Activated B cell treated with CpG ODN at 0.5 μM for 24 hours (primary cell): ENCODE measurements at regions of chr11 and their contacts with region 1.

Region 1: GRCh38 chr11:75399344-75400145 is at the start of gene RPS3:
- DNase-seq: peak; percentile 83
- ATAC-seq: peak; percentile 91
- H3K4me3 Mint-ChIP-seq: peak within 1 kb of the TSS; percentile 99
- H3K27ac Mint-ChIP-seq: peak within 1 kb of the TSS; percentile 98
- H3K4me1 Mint-ChIP-seq: peaks cover 49% of the 10 kb centered on the region
- H3K27me3 Mint-ChIP-seq: peaks cover 5% of the 10 kb centered on the region
- CTCF ChIP-seq: no peak
- total RNA-seq, gene RPS3: 4,635 and 5,236 TPM in 2 replicates

Region 2: GRCh38 chr11:75429902-75430719 is 30.6 kb after region 1 on chr11:
- CTCF ChIA-PET with region 1: no interaction called
- POLR2A ChIA-PET with region 1: interaction called, 5 read pairs
- intact Hi-C with region 1: loop called (anchors 1 kb)
- DNase-seq: peak; percentile 60
- ATAC-seq: peak; percentile 65
- H3K4me3 Mint-ChIP-seq: peak overlapping the region; percentile 82
- H3K27ac Mint-ChIP-seq: peak overlapping the region; percentile 43
- H3K4me1 Mint-ChIP-seq: peaks cover 26% of the 10 kb centered on the region
- H3K27me3 Mint-ChIP-seq: peaks cover 40% of the 10 kb centered on the region
- CTCF ChIP-seq: no peak

Region 3: GRCh38 chr11:75603791-75604736 is 204.5 kb after region 1 on chr11:
- CTCF ChIA-PET with region 1: no interaction called
- POLR2A ChIA-PET with region 1: no interaction called
- intact Hi-C with region 1: no loop called
- DNase-seq: no peak
- ATAC-seq: no peak
- H3K4me3 Mint-ChIP-seq: no peak overlapping the region
- H3K27ac Mint-ChIP-seq: no peak overlapping the region
- H3K4me1 Mint-ChIP-seq: no peaks in the 10 kb centered on the region
- H3K27me3 Mint-ChIP-seq: peaks cover 12% of the 10 kb centered on the region
- CTCF ChIP-seq: no peak

Region 4: DNA sequence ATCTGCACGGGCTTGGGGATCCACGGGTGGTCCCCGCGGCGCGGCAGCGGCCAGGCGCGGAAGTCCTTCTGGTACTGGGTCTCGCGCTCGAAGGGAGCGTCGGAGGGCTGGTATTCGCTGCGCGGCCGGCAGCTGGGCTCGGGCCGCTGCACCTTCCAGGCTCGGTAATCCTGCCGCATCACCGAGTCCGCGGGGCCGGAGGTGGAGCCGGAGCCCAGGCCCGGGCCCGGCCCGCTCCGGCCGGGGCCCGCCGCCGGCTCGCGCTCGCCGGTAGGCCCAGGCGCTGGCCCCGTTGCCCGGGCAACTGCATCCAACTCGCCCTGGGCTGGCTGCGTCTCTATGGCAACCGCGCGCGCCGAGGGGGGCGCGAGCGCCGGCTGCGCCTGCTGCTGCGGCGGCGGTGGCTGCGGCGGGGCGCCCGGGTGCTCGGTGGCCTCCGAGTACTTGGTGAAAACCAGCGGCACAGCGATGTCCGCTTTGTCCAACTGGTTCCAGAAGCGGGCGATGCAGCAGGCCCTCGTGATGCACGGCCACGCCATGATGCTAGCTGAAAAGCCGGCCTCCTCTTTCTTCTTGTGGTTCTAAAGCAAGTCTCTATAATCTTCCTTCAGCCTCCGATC is 268.4 kb after region 1 on chr11:
- CTCF ChIA-PET with region 1: no interaction called
- POLR2A ChIA-PET with region 1: no interaction called
- intact Hi-C with region 1: no loop called
- DNase-seq: peak; percentile 45
- ATAC-seq: peak; percentile 43
- H3K4me3 Mint-ChIP-seq: peak overlapping the region; percentile 87
- H3K27ac Mint-ChIP-seq: no peak overlapping the region
- H3K4me1 Mint-ChIP-seq: peaks cover 15% of the 10 kb centered on the region
- H3K27me3 Mint-ChIP-seq: peaks cover 50% of the 10 kb centered on the region
- CTCF ChIP-seq: no peak